Colonic mucosa (tissue), 4 donors: ENCODE measurements at regions of chr1 and their contacts with region 1.

Region 1: GRCh38 chr1:19390901-19391595 is 78.9 kb downstream of the SLC66A1 start:
- DNase-seq: peak; percentile 63
- H3K4me3 ChIP-seq: no peak overlapping the region
- H3K27ac ChIP-seq: peak overlapping the region; percentile 53
- H3K4me1 ChIP-seq: peaks cover 17% of the 10 kb centered on the region
- H3K27me3 ChIP-seq: no peaks in the 10 kb centered on the region
- CTCF ChIP-seq: peak; percentile 63

Region 2: GRCh38 chr1:19484798-19485361 is 93.8 kb after region 1 on chr1:
- intact Hi-C with region 1: loop called (anchors 5 kb)
- DNase-seq: no peak
- H3K4me3 ChIP-seq: peak overlapping the region; percentile 93
- H3K27ac ChIP-seq: peak overlapping the region; percentile 98
- H3K4me1 ChIP-seq: peaks cover 12% of the 10 kb centered on the region
- H3K27me3 ChIP-seq: no peaks in the 10 kb centered on the region
- CTCF ChIP-seq: no peak

Region 3: GRCh38 chr1:19582302-19582701 is 191.3 kb after region 1 on chr1:
- intact Hi-C with region 1: loop called (anchors 5 kb)
- DNase-seq: peak; percentile 89
- H3K4me3 ChIP-seq: no peak overlapping the region
- H3K27ac ChIP-seq: no peak overlapping the region
- H3K4me1 ChIP-seq: no peaks in the 10 kb centered on the region
- H3K27me3 ChIP-seq: no peaks in the 10 kb centered on the region
- CTCF ChIP-seq: peak; percentile 66

Region 4: DNA sequence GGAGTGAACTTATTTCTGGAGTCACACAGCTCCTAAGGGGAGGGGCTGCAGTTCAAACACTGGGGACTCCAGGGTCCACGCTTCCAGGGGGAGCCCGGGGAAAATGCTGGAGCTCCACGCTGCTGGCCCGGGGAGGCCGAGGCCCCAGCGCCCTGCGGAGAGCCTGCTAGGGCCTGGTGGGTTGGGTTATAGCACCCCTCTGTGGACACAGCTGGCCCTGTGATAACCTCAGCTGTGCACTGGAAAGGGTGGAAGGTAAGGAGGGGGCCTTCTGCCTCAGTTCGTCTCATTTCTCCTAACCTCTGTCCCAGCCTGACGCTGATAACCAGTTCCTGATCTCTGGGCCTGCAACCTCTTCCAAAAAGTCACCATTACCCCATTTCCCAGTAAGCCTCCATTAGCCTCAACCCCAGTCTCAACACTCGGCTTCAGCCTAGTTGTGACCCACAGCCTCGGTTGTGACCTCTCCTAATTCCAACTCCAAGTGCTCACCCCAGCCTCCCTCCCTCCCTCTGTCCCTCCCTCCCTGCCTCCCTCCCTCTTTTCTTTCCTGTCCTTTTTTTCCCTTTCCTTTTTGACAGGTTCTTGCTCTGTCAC is 260.2 kb after region 1 on chr1:
- intact Hi-C with region 1: loop called (anchors 5 kb)
- DNase-seq: no peak
- H3K4me3 ChIP-seq: no peak overlapping the region
- H3K27ac ChIP-seq: peak overlapping the region; percentile 43
- H3K4me1 ChIP-seq: peaks cover 33% of the 10 kb centered on the region
- H3K27me3 ChIP-seq: no peaks in the 10 kb centered on the region
- CTCF ChIP-seq: peak; percentile 33